ENCODE measurements at regions of chr7 and their contacts with region 1.

Region 1: DNA sequence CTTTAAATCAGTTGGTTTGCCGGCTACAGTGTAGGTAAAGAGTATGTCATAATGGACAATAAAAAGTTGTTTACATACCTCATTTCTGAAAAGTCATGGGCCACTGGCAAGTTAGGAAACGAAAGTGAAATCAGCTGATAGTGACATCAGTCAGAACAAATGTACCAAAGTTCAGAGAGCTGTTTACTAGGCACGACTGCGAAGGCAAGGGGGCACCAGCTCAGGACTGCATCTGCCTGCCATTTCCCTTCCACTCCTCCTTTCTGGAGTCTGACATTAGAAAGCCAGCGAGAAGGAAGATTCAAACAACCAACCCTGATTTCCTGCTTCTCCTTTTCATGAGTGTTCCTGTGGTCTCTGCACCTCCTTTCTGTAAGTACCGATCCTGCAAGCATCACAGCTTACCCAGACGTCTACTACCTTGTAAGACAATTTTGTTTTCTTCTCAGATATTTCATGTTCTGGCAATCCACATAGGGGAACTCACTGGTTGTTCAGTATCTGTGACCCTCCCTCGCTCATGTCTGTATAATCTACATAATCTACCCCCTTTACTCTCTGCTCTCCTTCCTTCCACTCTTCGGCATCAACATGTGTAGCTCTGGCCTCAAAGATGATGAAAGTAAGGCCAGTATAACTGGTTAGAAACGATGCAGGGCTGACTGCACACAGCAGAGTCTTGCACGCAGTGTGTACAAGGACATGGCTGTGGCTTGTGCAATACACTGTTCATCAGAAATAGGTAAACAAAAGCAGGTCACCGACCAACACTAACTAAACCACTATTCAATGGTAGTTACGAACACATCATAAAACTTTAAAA is at the start of gene TMEM140:
- DNase-seq: peak; percentile 72
- H3K4me3 Mint-ChIP-seq: peak within 1 kb of the TSS; percentile 81
- H3K27ac Mint-ChIP-seq: peak within 1 kb of the TSS; percentile 91
- H3K4me1 Mint-ChIP-seq: peaks cover 49% of the 10 kb centered on the region
- H3K27me3 Mint-ChIP-seq: no peaks in the 10 kb centered on the region
- total RNA-seq, gene TMEM140: 8.1 to 9.2 TPM

Region 2: GRCh38 chr7:134458806-134459698 is 689.1 kb before region 1 on chr7 and contains the start of gene AKR1B1:
- CTCF ChIA-PET with region 1: no interaction called
- intact Hi-C with region 1: loop called (anchors 5 kb)
- DNase-seq: peak; percentile 90
- H3K4me3 Mint-ChIP-seq: peak within 1 kb of the TSS; percentile 81
- H3K27ac Mint-ChIP-seq: peak within 1 kb of the TSS; percentile 70
- H3K4me1 Mint-ChIP-seq: peaks cover 46% of the 10 kb centered on the region
- H3K27me3 Mint-ChIP-seq: no peaks in the 10 kb centered on the region
- total RNA-seq, gene AKR1B1: 103 to 107 TPM

Region 3: DNA sequence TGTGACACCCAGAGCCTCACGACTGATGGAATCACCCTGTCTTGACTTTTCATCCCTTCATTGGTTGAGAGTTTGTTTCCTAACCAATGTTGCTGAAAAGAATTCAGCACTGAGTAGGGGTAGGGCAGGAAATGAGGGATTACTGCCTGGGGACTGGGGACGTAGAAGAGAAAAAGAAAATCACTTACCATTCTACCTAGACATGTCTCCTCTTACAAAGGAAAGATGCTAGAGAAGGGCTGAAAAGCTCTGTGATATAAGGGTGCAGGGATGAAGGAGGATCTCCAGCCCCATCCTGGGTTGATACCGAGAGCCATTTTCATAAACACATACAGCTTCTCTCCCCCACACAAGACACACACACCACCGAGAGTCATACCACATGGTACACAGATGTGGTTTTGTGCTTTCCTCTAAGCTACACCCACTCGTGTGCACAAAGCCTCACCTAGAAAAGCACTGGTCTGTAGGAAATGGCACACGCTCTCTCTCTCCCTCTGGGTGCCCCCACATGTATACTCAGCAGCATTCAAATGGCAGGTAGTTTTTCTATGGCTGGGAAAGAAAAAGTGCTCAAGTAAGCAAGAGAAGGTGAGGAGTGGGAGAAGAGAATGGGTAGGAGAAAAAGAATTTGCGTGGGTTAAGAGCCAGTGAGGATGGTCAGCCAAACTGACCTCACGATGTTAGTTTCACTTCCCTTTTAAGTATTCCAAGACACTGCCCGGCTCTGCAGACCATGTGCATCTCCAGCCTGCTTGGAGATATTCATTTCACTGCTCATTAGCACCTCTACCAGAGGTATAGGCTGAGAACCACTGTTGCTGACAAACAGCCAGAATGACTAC is 282.9 kb before region 1 on chr7:
- CTCF ChIA-PET with region 1: no interaction called
- intact Hi-C with region 1: loop called (anchors 2 kb)
- DNase-seq: peak; percentile 62
- H3K4me3 Mint-ChIP-seq: peak overlapping the region; percentile 65
- H3K27ac Mint-ChIP-seq: peak overlapping the region; percentile 77
- H3K4me1 Mint-ChIP-seq: peaks cover 39% of the 10 kb centered on the region
- H3K27me3 Mint-ChIP-seq: no peaks in the 10 kb centered on the region

Region 4: GRCh38 chr7:135160098-135160857 is 12.2 kb after region 1 on chr7:
- CTCF ChIA-PET with region 1: interaction called, 23 read pairs
- intact Hi-C with region 1: loop called (anchors 1 kb)
- DNase-seq: peak; percentile 34
- H3K4me3 Mint-ChIP-seq: no peak overlapping the region
- H3K27ac Mint-ChIP-seq: peak overlapping the region; percentile 90
- H3K4me1 Mint-ChIP-seq: peaks cover 34% of the 10 kb centered on the region
- H3K27me3 Mint-ChIP-seq: no peaks in the 10 kb centered on the region

Region 5: DNA sequence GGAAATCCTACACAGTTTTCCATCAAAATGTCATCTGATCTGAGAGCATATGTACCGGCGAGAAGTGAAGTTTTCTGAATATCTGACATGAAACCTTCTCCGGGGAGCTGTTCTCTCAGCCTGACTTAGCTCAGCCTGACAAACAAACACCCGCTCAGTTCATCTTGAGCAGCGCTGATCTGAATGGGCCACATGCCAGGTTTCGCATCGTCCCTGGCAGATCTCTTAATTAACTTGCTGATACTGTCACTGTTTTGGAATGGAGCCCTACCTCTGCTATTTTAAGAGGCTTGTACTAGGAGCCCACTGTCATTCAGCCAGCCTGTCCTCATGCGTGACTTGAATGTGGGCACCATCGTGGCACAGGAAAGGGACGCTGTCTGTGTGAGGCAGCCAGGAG is 194.8 kb after region 1 on chr7:
- CTCF ChIA-PET with region 1: no interaction called
- intact Hi-C with region 1: no loop called
- DNase-seq: no peak
- H3K4me3 Mint-ChIP-seq: no peak overlapping the region
- H3K27ac Mint-ChIP-seq: no peak overlapping the region
- H3K4me1 Mint-ChIP-seq: no peaks in the 10 kb centered on the region
- H3K27me3 Mint-ChIP-seq: no peaks in the 10 kb centered on the region

Region 6: DNA sequence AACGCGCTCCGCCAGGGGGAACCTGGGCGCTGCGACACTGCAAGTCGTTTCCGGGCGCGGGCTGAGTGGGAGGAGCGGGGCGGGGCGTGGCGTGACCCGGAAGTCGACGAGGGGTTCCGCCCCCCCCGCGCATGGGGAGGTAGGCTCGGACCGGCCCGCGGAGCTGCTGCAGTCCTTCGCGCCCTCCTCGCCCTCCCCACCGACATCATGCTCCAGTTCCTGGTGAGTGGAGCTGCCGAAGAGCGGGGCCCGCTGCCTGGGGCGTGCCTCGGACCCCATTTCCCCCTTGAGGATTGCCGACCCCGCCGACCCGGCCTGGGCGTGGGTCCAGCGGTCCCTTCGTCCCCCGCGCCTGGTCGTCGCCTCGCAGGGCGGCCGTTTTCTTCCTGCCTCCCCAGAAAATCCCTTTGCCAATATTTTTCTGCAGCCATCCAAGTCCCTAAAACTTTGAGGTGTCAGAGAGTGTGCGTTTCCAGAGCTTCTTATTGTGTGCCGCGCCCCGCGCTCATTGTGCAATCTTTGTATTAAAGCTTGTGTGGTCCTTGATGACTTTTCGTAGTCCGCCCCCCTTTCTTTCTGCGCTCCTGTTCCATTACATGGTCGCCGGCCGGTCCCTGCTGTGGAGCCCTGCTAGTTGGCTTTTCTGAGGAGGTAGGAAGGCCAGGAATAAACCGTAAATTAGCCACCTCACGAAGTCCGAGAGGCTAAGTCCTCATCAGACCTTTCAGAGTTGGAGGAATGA is 514.4 kb after region 1 on chr7 and contains the start of gene STMP1:
- CTCF ChIA-PET with region 1: no interaction called
- intact Hi-C with region 1: loop called (anchors 2 kb)
- DNase-seq: peak; percentile 97
- H3K4me3 Mint-ChIP-seq: peak within 1 kb of the TSS; percentile 98
- H3K27ac Mint-ChIP-seq: peak within 1 kb of the TSS; percentile 96
- H3K4me1 Mint-ChIP-seq: peaks cover 46% of the 10 kb centered on the region
- H3K27me3 Mint-ChIP-seq: no peaks in the 10 kb centered on the region
- total RNA-seq, gene STMP1: 21.5 to 21.6 TPM